ENCODE measurements at regions of chr2 and their contacts with region 1.

Region 1: DNA sequence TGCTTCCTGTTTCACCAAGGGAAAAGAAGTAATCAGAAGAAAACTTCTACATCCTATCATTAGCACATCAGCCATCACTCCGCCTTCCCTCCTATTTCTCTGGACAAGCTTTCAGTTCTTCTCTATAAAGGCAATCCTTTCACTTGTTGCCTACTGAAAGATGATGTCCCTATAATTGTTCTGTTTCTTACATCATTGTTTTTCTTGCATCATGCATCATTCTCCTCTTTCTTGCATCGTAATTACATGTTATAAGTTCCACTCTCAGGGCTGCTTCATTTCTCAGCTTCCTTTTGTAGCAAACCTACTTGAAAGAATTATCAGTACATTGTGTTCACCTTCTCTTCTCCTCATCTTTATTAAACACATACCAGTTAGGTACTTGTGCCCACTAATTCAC is 7.2 kb downstream of the SLC30A6 start:
- DNase-seq: no peak

Region 2: DNA sequence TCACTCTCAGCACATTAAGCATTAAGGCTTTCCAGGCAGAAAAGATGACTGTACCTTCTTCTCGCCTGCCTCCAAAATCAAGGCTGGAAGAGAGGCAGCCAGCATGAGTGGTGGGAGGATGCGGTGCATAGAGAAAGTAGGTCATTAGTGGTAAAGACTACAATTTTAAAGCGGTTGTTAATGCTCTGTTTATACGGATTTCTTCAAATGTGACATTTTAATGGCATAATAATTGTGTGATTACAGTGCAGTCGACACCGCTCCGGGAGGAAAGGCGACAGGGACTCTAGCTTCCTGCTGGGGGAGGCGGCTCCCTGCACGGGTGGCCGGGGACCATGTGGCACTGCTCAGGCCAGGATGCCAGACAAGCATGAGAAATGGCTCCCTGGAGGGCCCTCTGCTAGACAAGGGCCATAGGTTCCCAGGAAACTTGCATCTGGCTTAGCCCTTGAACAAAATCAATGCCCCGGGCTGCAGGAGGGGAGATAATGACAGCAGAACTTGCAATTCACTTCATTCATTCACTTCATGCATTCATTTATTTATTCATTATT is 1164.2 kb before region 1 on chr2:
- intact Hi-C with region 1: no loop called
- DNase-seq: peak; percentile 57

Region 3: GRCh38 chr2:32235315-32235714 is 62.4 kb after region 1 on chr2:
- intact Hi-C with region 1: no loop called
- DNase-seq: no peak

Region 4: DNA sequence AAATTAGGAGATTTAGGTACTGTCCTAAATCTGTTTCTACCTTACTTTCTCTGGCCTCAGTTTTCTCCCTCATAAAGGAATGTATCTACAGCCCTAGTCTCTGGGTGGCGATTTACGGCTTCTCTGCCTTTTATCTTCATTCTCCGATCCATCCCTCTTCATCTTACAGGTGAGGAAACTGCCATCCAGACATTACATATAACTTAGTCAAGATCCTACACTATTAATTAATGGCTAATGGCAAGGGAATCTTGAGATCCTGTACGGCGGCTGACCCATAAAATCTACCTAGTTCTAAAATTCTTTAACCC is 104.4 kb after region 1 on chr2:
- intact Hi-C with region 1: no loop called
- DNase-seq: no peak

Region 5: DNA sequence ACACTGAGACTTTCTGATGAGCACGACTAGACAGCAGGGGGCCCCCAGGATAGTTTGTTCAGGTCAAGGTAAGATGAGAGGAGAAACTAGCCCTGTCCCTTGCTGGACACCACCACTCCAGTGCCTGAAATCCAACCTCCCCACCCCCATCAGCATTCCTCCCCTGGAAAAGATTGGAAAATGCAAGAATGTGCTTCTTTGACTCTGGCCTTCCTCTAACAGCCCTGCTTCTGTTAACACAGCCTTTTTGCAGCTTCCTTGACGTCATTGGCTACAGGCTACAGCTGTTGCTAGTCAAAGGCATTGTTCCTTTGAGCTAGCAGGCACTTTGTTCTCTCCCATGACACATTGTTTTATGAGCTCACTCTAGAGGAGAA is 753.8 kb after region 1 on chr2:
- intact Hi-C with region 1: loop called in 1 of 2 experiments (anchors 5 kb)
- DNase-seq: no peak